ENCODE measurements at regions of chr3 and their contacts with region 1.

Region 1: DNA sequence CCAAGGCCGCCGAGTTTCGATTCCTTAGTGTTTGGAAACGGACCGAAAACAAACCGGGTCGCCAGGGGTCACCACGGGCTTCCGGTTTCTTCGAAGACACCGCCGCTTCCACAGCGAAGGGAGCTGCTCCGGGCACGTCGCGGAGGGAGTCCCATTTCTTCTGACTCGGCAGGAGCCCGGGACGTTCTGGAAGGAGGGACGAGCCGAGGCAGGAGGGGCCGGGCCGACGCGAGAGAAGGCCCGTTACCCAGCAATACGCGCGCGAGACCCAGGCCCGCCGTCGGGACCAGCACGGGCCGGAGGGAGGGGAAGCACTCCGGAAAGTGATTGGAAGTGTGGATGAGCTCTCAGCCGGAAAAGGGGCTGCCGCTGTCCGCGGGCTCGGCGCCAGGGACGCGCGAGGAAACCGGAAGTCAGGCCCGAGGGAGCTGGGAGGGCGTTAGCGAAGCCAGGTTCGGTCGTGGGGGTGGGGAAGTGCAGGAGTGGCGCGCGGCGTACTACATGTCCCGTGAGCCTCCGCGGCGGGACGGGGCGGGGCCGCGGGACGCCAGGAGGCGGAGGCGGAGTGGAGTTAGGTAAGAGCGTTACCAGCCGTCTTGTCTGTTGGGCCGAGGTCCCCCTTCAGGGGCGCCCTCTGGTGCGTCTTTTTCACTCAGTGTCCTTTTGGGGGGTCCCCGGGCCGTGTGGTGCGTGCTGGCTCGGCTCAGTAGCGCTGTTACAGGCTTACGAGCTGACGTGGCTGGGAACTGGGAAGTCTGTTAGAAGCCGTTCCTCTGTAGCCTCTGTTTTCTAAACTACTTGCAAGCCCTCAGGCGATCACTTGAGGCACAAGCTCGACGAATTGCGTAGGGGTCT is at the starts of genes AZI2 and ZCWPW2:
- DNase-seq: peak; percentile 98
- H3K4me3 ChIP-seq: peak within 1 kb of the TSS; percentile 66
- H3K27ac ChIP-seq: peak within 1 kb of the TSS; percentile 95
- H3K4me1 ChIP-seq: peaks cover 26% of the 10 kb centered on the region
- H3K27me3 ChIP-seq: no peaks in the 10 kb centered on the region
- CTCF ChIP-seq: no peak; the same call in 1 of the 2 replicates
- total RNA-seq, gene AZI2: 86.7 and 106 TPM in 2 replicates
- total RNA-seq, gene ZCWPW2: not detected in 2 replicates

Region 2: DNA sequence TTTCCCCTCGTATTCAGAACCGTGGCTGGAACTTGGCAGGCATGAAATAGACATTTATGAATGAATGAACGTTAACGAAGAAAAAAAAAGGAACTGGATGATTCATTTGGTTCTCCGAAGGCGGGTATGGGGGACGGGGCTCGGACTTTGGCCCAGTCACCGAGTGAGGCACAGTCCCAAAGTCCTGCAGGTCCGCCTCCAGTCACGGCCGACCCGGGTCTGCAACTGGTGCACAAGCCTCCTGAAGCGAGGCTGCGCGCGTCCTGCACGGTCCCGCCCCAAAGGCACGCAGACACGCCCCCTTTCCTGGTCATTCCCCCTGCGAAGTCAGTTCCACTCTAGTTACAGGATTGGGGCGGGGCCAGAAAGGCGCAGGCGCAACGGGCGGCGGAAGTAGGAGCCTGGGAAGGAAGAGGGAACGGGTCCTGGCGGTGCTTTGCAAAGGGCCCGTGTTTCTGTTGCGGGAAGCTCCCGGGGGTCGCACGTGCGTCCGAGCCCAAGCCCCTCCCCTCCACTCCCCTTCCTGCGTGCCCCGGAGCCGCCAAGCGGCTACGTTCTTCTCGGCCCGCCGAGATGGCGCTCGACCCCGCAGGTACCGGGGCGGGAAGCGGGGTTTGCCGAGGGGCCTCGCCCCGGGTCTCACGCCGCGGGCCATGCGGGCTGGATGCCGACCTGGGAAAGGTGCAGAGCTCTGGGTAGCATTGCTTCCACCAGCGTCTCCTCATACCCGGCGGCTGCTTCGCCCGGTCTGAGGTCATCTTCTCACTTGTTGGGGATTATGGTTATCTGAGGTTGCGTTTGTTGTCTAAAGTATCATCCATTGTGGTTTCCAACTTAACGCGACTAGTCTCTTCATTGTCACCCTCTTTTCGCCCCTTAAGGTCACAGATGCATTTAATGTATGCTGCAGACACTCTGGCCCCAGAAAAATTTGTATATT is 107.4 kb before region 1 on chr3 and contains the start of gene CMC1:
- CTCF ChIA-PET with region 1: no interaction called
- POLR2A ChIA-PET with region 1: no interaction called
- intact Hi-C with region 1: loop called (anchors 10 kb)
- DNase-seq: peak; percentile 98
- H3K4me3 ChIP-seq: peak within 1 kb of the TSS; percentile 92
- H3K27ac ChIP-seq: peak within 1 kb of the TSS; percentile 85
- H3K4me1 ChIP-seq: peaks cover 6% of the 10 kb centered on the region
- H3K27me3 ChIP-seq: no peaks in the 10 kb centered on the region
- CTCF ChIP-seq: no peak
- total RNA-seq, gene CMC1: 19.3 and 25.1 TPM in 2 replicates

Region 3: DNA sequence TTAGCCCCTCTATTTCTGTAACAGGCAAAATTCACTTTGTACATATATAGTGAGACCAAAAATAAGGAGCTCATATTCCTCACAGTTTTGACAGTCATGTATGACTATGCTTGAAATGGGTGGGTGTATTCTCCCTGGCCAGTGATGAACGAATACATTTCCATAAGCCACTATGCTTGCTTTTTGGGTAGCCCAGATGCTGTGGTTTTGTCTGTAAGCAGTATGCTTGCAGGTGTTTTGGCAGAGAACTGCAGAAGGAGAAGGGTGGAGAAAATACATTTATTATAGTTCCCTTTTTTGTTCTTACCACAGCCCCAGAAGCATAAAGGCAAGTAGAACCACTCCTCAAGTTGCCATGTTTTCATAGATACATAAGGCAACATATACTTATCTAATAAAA is 1063.3 kb after region 1 on chr3:
- CTCF ChIA-PET with region 1: no interaction called
- POLR2A ChIA-PET with region 1: no interaction called
- intact Hi-C with region 1: no loop called
- DNase-seq: no peak
- H3K4me3 ChIP-seq: no peak overlapping the region
- H3K27ac ChIP-seq: no peak overlapping the region
- H3K4me1 ChIP-seq: peaks cover 38% of the 10 kb centered on the region
- H3K27me3 ChIP-seq: no peaks in the 10 kb centered on the region
- CTCF ChIP-seq: no peak

Measured in A673 (cell line).